IMR-90 (cell line): ENCODE measurements at regions of chr7 and their contacts with region 1.

Region 1: DNA sequence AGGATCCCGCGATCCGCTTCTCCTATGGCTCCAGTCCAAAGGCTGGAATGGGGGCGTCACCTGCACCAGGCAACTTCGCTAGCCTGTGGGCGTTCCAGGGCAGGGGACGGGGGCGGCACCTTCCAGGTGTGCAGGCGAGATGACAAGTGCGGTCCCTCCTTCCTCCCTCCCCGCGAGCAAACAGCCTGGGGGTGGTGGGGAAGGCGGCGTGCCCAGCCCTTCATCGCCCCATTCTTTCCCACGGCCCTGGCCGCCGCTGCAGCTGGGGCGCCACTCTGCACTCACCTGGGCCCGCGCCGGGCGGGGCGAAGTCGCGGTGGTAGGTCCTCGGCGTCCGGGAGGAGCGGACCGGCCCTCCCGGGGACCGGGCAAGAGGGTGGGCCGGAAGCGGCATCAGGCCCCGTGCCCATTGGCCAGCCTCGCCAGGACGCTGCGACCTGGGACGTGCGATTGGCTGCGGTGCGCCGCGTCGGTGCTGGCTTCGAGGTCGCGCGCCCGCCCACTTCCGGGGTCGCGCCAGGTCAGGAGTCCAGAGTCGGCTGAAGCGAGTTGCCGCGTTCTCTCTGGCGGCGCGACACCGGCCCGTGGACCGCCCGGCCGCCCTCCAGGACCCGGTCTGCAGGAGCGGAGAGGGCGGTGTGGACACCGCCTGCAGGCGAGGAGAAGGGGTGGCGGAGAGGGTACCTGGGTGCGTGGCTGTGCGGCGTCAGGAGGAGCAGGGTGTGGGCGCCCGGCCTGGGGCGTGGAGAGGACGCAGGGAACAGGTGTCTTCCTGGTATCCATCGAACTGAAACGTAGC is at the start of gene TECPR1:
- DNase-seq: peak; percentile 86
- ATAC-seq: peak; percentile 100
- H3K4me3 ChIP-seq: peak within 1 kb of the TSS; percentile 94
- H3K27ac ChIP-seq: peak within 1 kb of the TSS; percentile 62
- H3K4me1 ChIP-seq: peaks cover 8% of the 10 kb centered on the region
- H3K27me3 ChIP-seq: no peaks in the 10 kb centered on the region
- CTCF ChIP-seq: no peak
- POLR2A ChIP-seq: no peak
- RAD21 ChIP-seq: no peak
- total RNA-seq, gene TECPR1: 6.9 and 14.7 TPM in 2 replicates

Region 2: DNA sequence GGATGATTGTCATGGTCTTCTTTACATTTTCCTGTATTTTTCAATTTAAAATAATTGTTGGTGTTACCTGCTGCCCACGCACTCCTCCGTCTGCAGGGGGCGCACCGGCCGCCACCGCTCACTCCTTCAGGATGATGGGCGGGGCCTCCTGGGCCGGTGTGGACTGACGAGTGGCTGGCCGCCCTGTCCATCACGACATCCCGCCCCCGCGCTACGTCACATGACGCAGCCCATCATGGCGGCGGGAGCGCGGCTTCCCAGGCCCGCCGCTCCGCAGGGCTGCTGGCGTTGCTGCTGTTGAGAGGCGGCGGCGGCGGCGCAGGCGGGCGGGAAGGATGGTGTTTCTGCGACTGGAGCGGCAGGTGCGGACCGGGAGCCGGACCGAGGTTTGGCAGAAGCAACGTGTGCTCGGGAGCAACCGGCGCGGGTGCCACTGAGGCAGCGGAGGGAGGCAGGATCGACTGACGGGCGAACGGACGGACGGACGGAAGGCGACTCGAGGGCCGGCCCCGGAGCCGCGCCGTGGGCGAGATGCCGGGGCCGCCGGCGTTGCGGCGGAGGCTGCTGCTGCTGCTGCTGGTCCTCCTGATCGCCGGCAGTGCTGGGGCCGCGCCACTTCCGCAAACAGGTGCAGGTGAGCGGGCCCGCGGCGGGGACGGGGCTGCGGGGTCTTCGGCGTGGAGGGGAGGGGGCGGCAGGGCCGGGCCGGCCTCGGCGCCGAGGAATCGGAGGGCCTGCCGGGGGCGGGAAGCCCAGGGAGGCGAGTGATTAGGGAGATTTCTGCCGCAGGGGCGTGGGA is 145.2 kb before region 1 on chr7 and contains the start of gene LMTK2:
- CTCF ChIA-PET with region 1: no interaction called
- POLR2A ChIA-PET with region 1: no interaction called
- dilution Hi-C with region 1: no loop called
- in situ Hi-C with region 1: no loop called
- intact Hi-C with region 1: loop called (anchors 1 kb)
- DNase-seq: peak; percentile 86
- ATAC-seq: peak; percentile 100
- H3K4me3 ChIP-seq: peak within 1 kb of the TSS; percentile 87
- H3K27ac ChIP-seq: peak within 1 kb of the TSS; percentile 55
- H3K4me1 ChIP-seq: no peaks in the 10 kb centered on the region
- H3K27me3 ChIP-seq: no peaks in the 10 kb centered on the region
- CTCF ChIP-seq: peak; percentile 98
- POLR2A ChIP-seq: peak; percentile 73
- RAD21 ChIP-seq: peak; percentile 72
- total RNA-seq, gene LMTK2: 5.0 and 5.3 TPM in 2 replicates

Region 3: GRCh38 chr7:98210513-98211220 is 41.4 kb before region 1 on chr7:
- CTCF ChIA-PET with region 1: no interaction called
- POLR2A ChIA-PET with region 1: no interaction called
- dilution Hi-C with region 1: no loop called
- in situ Hi-C with region 1: no loop called
- intact Hi-C with region 1: loop called (anchors 1 kb)
- DNase-seq: no peak
- ATAC-seq: peak; percentile 42; the same call in 1 of the 2 replicates
- H3K4me3 ChIP-seq: peak overlapping the region; percentile 18; the same call in 1 of the 2 replicates
- H3K27ac ChIP-seq: no peak overlapping the region
- H3K4me1 ChIP-seq: no peaks in the 10 kb centered on the region
- H3K27me3 ChIP-seq: no peaks in the 10 kb centered on the region
- CTCF ChIP-seq: no peak
- POLR2A ChIP-seq: no peak
- RAD21 ChIP-seq: no peak

Region 4: GRCh38 chr7:98321306-98321705 is 69.3 kb after region 1 on chr7:
- CTCF ChIA-PET with region 1: no interaction called
- POLR2A ChIA-PET with region 1: no interaction called
- dilution Hi-C with region 1: no loop called
- in situ Hi-C with region 1: no loop called
- intact Hi-C with region 1: no loop called
- DNase-seq: no peak
- ATAC-seq: no peak
- H3K4me3 ChIP-seq: no peak overlapping the region
- H3K27ac ChIP-seq: no peak overlapping the region
- H3K4me1 ChIP-seq: no peaks in the 10 kb centered on the region
- H3K27me3 ChIP-seq: no peaks in the 10 kb centered on the region
- CTCF ChIP-seq: no peak
- POLR2A ChIP-seq: no peak
- RAD21 ChIP-seq: no peak

Region 5: DNA sequence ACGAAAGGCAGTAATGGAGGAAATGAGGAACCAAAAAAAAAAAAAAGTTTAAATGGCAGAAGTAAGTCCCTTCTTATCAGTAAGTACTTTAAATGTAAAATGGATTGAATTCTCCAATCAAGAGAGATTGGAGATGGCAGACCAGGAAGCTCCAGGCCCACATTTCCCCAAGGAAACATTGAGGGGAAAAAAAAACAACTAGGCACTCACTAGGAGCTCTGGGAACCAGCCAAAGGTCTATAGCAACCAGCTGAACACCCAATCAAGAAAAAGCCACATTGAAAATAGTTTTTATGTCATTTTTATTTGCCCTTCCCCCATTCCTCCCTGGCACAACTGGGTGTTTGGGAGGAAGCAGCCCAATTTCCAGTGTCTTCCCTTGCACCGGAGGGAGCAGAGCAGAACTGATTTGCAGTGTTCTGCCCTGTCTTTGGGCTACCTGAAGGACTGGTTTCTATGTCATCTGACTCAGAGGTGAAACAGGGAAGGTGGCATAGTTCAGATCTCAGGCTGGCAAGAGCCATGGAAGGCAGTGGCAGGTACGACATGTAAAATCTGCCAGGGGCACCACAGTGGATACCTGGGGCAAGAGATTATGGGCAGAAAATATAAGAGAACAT is 770.0 kb after region 1 on chr7:
- CTCF ChIA-PET with region 1: no interaction called
- POLR2A ChIA-PET with region 1: no interaction called
- dilution Hi-C with region 1: no loop called
- in situ Hi-C with region 1: no loop called
- intact Hi-C with region 1: no loop called
- DNase-seq: no peak
- ATAC-seq: no peak
- H3K4me3 ChIP-seq: no peak overlapping the region
- H3K27ac ChIP-seq: no peak overlapping the region
- H3K4me1 ChIP-seq: no peaks in the 10 kb centered on the region
- H3K27me3 ChIP-seq: no peaks in the 10 kb centered on the region
- CTCF ChIP-seq: no peak
- POLR2A ChIP-seq: no peak
- RAD21 ChIP-seq: no peak